ENCODE measurements at regions of chr16 and their contacts with region 1.

Region 1: DNA sequence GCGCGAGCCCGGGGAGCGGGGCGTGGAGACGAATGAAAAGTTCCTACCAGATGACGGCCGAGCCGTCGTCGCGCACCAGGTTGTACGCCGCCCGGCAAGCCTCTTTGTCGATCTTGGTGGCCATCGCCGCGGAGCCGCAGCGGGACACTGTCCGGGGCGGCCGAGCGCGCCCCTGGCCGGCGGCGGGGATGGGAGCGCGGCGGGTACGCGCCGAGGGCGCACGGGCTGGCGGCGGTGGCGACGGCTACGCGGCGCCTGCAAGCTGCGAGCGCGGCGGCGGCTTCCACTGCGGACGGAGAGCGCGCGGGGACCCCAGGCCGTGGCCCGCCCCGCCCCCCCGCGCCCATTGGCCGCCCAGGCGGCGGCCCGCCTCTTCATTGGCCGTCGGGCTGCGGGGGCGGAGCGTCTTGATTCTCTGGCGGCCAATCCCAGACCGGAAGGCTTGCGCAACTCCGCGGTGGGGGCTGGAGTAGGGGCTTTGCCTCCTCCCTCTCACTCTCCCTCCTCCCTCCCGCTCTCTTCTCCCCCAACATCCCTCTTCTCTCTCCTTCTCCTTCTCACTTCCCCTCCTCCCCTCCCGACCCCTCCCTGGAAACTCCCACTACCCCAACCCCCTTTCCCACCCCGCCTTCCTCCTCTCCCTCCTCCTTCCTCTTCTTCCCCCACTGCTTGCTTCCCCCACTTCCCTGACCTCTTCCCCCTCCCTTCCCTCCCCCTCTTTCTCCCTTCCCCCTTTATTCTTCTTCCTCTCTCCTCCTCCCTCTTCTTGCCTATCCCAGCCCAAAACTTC is at the start of gene COTL1:
- DNase-seq: peak; percentile 93

Region 2: GRCh38 chr16:84511180-84511824 is 106.7 kb before region 1 on chr16:
- CTCF ChIA-PET with region 1: interaction called, 49 read pairs
- POLR2A ChIA-PET with region 1: interaction called, 3 read pairs
- DNase-seq: peak; percentile 73

Region 3: GRCh38 chr16:84641643-84642358 is 23.8 kb after region 1 on chr16:
- CTCF ChIA-PET with region 1: no interaction called
- POLR2A ChIA-PET with region 1: no interaction called
- DNase-seq: no peak